CD8-positive, alpha-beta T cell (primary cell): ENCODE measurements at regions of chr2 and their contacts with region 1.

Region 1: GRCh38 chr2:73949802-73950201 is 23.1 kb downstream of the DGUOK start:
- DNase-seq: no peak
- ATAC-seq: no peak
- H3K4me3 ChIP-seq: no peak overlapping the region
- H3K4me3 Mint-ChIP-seq: no peak overlapping the region
- H3K27ac ChIP-seq: peak overlapping the region; percentile 2 to 38
- H3K27ac Mint-ChIP-seq: peak overlapping the region; percentile 82
- H3K4me1 ChIP-seq: peaks cover 62% of the 10 kb centered on the region
- H3K4me1 Mint-ChIP-seq: peaks cover 84% of the 10 kb centered on the region
- H3K27me3 ChIP-seq: no peaks in the 10 kb centered on the region
- H3K27me3 Mint-ChIP-seq: no peaks in the 10 kb centered on the region
- CTCF ChIP-seq: no peak

Region 2: DNA sequence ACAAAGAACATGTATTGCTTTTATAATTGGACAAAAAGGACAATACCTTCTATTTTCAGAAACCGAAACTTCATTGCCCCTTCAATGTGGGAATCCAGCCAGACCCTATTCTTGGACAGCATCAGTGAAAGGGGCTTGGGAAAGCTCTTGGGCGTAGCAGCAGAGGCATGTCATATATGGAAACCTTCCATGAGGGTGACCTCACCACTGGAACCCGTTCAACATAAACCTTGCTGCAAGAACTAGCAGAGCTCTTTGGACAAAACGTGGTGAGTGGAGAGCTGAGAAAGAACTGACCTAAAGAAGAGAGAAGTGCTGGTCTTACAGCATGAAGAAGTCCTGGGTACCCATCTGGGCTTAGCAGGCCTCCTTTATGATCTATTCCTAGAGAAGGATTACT is 79.7 kb before region 1 on chr2:
- CTCF ChIA-PET with region 1: no interaction called
- POLR2A ChIA-PET with region 1: no interaction called
- intact Hi-C with region 1: no loop called
- DNase-seq: no peak
- ATAC-seq: no peak
- H3K4me3 ChIP-seq: no peak overlapping the region
- H3K4me3 Mint-ChIP-seq: no peak overlapping the region
- H3K27ac ChIP-seq: no peak overlapping the region
- H3K27ac Mint-ChIP-seq: no peak overlapping the region
- H3K4me1 ChIP-seq: no peaks in the 10 kb centered on the region
- H3K4me1 Mint-ChIP-seq: no peaks in the 10 kb centered on the region
- H3K27me3 ChIP-seq: no peaks in the 10 kb centered on the region
- H3K27me3 Mint-ChIP-seq: no peaks in the 10 kb centered on the region
- CTCF ChIP-seq: no peak

Region 3: DNA sequence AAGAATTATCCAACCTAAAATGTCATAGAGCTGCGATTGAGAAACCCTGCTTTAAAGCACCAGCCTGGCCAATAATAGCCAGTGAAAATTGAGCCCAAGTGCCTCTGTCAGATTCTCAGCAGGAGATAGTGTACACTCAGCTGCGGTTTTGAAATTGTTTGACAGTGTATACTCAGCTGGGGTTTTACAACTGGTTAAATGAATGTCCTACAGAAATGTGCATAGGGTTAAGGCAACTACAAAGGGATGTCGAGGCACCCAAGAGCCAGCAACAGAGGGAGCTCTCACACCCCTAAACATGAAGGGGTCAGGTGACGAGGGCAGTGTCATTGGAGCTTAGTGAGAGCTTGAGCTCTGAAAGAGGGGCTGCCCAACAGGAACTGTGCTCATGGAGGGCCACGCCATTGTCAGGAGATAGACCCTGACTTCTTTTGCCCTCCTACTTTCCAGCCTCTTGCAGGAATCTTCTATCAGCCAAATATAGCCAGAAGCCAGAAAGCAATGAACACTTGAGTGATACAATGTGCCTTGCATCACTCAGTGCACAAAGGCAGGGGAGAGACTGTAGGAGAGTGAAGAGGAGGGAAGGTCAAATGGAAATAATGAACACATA is 41.9 kb before region 1 on chr2:
- CTCF ChIA-PET with region 1: interaction called, 3 read pairs
- POLR2A ChIA-PET with region 1: no interaction called
- intact Hi-C with region 1: loop called in 1 of 2 experiments (anchors 1 kb)
- DNase-seq: peak; percentile 19 to 79 (median 61)
- ATAC-seq: peak; percentile 90
- H3K4me3 ChIP-seq: no peak overlapping the region
- H3K4me3 Mint-ChIP-seq: no peak overlapping the region
- H3K27ac ChIP-seq: no peak overlapping the region
- H3K27ac Mint-ChIP-seq: peak overlapping the region; percentile 7
- H3K4me1 ChIP-seq: no peaks in the 10 kb centered on the region
- H3K4me1 Mint-ChIP-seq: peaks cover 3% of the 10 kb centered on the region
- H3K27me3 ChIP-seq: no peaks in the 10 kb centered on the region
- H3K27me3 Mint-ChIP-seq: no peaks in the 10 kb centered on the region
- CTCF ChIP-seq: peak; percentile 44

Region 4: DNA sequence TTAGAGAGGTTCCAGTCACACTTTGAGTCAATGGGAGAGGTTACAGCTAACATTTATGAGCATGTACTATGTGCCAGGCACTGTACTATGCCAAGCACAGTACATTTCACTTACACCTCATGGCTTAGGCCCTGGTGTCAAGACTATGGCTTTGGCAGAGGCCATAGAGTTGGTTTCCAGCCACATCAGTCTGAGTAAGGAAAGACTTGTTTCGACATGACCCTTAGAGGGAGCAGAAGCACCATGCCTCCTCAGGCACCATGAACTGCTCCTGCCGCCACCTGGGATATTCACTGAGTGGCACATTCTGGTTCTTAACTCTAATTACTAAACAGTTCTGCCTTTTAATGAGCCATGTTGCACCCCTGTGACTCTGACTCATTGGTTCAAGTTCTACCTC is 10.4 kb before region 1 on chr2:
- CTCF ChIA-PET with region 1: interaction called, 12 read pairs
- POLR2A ChIA-PET with region 1: no interaction called
- intact Hi-C with region 1: no loop called
- DNase-seq: peak in 4 of 9 experiments; percentile 34 to 64 (median 44)
- ATAC-seq: peak; percentile 80
- H3K4me3 ChIP-seq: no peak overlapping the region
- H3K4me3 Mint-ChIP-seq: no peak overlapping the region
- H3K27ac ChIP-seq: no peak overlapping the region
- H3K27ac Mint-ChIP-seq: peak overlapping the region; percentile 56
- H3K4me1 ChIP-seq: peaks cover 33% of the 10 kb centered on the region
- H3K4me1 Mint-ChIP-seq: peaks cover 73% of the 10 kb centered on the region
- H3K27me3 ChIP-seq: no peaks in the 10 kb centered on the region
- H3K27me3 Mint-ChIP-seq: no peaks in the 10 kb centered on the region
- CTCF ChIP-seq: peak; percentile 20